Left ventricle myocardium inferior (tissue), 1 donor: ENCODE measurements at regions of chr10 and their contacts with region 1.

Region 1: GRCh38 chr10:132389433-132390169 is 7.4 kb upstream of the PWWP2B start:
- DNase-seq: peak; percentile 11
- H3K4me3 ChIP-seq: no peak overlapping the region
- H3K27ac ChIP-seq: no peak overlapping the region
- H3K4me1 ChIP-seq: peaks cover 12% of the 10 kb centered on the region
- H3K27me3 ChIP-seq: peaks cover 10% of the 10 kb centered on the region
- CTCF ChIP-seq: no peak

Region 2: DNA sequence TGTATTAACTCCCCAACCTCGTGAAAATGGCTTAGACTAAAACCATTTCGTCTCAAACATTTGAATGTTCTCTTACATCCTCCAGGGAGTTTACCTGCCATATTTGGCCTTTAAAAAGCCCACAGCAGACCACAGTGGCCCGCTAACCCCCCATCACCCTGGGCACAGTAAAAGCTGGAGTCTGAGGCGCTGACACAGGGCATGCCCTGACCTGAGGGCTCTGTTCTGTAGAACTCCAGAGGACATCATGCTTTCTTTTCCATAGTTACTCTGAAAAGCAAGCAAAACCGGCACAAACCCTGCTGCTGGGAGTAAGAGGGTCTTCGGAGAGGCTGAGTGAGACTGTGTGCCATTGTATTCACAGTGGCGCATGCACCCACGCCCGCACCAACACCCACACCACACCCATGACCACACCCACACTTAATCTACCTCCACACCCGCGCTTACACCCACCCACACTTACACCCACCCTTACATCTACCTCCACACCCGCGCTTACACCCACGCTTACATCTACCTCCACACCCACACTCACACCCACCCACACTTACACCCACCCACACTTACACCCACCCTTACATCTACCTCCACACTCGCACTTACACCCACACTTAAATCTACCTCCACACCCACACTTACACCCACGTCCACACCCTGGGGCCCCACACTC is 25.5 kb before region 1 on chr10:
- intact Hi-C with region 1: no loop called
- DNase-seq: no peak
- H3K4me3 ChIP-seq: no peak overlapping the region
- H3K27ac ChIP-seq: no peak overlapping the region
- H3K4me1 ChIP-seq: peaks cover 10% of the 10 kb centered on the region
- H3K27me3 ChIP-seq: no peaks in the 10 kb centered on the region
- CTCF ChIP-seq: no peak

Region 3: DNA sequence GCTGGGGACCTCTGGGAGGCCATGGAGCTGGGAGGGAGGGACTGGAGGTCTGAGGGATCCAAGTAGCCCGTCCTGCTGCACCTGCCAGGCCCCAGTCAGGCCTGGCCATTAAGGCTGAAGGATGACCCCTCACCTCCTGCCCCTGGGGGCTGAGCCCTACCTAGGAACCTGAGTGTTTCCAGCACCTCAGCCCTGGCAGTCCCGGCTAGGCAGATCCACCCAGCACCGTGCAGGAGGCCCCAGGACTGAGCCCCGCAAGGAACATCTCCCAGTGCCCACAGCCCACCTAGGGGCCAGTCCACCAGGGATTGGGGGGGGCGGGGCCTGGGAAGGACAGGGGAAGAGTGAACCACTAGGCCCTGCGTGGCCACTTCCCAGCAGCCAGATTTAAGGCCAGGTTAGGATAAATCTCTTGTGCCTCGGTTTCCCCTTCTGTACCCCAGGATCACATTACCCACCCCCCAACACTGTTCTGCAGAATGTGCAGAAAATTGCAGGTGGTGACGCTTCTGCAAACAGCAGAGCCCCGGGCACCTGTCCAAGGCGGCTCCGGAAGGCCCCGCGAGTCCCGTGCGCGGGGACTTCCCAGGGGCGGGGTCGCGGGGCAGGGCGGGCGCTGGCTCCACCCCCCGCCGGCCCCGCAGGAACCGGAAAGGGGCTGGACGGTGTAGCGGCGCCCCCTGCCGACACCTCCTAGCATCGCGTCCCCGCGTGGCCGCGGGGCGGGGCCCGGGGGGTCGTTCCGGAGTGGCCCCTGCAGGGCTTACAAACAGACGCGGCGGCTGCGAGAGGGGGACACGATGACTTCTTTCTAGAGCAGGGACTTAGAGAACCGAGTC is 63.2 kb after region 1 on chr10:
- intact Hi-C with region 1: loop called (anchors 5 kb)
- DNase-seq: peak; percentile 85
- H3K4me3 ChIP-seq: peak overlapping the region; percentile 44
- H3K27ac ChIP-seq: no peak overlapping the region
- H3K4me1 ChIP-seq: peaks cover 21% of the 10 kb centered on the region
- H3K27me3 ChIP-seq: peaks cover 18% of the 10 kb centered on the region
- CTCF ChIP-seq: peak; percentile 97